CD8-positive, alpha-beta T cell (primary cell): ENCODE measurements at regions of chr12 and their contacts with region 1.

Region 1: GRCh38 chr12:57441846-57442427 is 7.4 kb downstream of the INHBC start:
- DNase-seq: no peak
- ATAC-seq: no peak
- H3K4me3 ChIP-seq: no peak overlapping the region
- H3K4me3 Mint-ChIP-seq: no peak overlapping the region
- H3K27ac ChIP-seq: no peak overlapping the region
- H3K27ac Mint-ChIP-seq: no peak overlapping the region
- H3K4me1 ChIP-seq: no peaks in the 10 kb centered on the region
- H3K4me1 Mint-ChIP-seq: no peaks in the 10 kb centered on the region
- H3K27me3 ChIP-seq: no peaks in the 10 kb centered on the region
- H3K27me3 Mint-ChIP-seq: peaks cover 7% of the 10 kb centered on the region
- CTCF ChIP-seq: no peak

Region 2: GRCh38 chr12:56839915-56840325 is 602.0 kb before region 1 on chr12:
- CTCF ChIA-PET with region 1: no interaction called
- POLR2A ChIA-PET with region 1: no interaction called
- intact Hi-C with region 1: loop called in 1 of 2 experiments (anchors 5 kb)
- DNase-seq: peak in 4 of 9 experiments; percentile 13 to 35 (median 16)
- ATAC-seq: no peak
- H3K4me3 ChIP-seq: no peak overlapping the region
- H3K4me3 Mint-ChIP-seq: no peak overlapping the region
- H3K27ac ChIP-seq: no peak overlapping the region
- H3K27ac Mint-ChIP-seq: no peak overlapping the region
- H3K4me1 ChIP-seq: peaks cover 10% of the 10 kb centered on the region
- H3K4me1 Mint-ChIP-seq: peaks cover 17% of the 10 kb centered on the region
- H3K27me3 ChIP-seq: no peaks in the 10 kb centered on the region
- H3K27me3 Mint-ChIP-seq: no peaks in the 10 kb centered on the region
- CTCF ChIP-seq: no peak

Region 3: GRCh38 chr12:57517187-57517586 is 75.2 kb after region 1 on chr12:
- CTCF ChIA-PET with region 1: no interaction called
- POLR2A ChIA-PET with region 1: no interaction called
- intact Hi-C with region 1: no loop called
- DNase-seq: peak in 1 of 9 experiments; percentile 13
- ATAC-seq: no peak
- H3K4me3 ChIP-seq: no peak overlapping the region
- H3K4me3 Mint-ChIP-seq: no peak overlapping the region
- H3K27ac ChIP-seq: peak overlapping the region in 1 of 2 experiments; percentile 5
- H3K27ac Mint-ChIP-seq: no peak overlapping the region
- H3K4me1 ChIP-seq: peaks cover 32% of the 10 kb centered on the region
- H3K4me1 Mint-ChIP-seq: peaks cover 32% of the 10 kb centered on the region
- H3K27me3 ChIP-seq: no peaks in the 10 kb centered on the region
- H3K27me3 Mint-ChIP-seq: no peaks in the 10 kb centered on the region
- CTCF ChIP-seq: no peak